Activated CD4-positive, alpha-beta T cell treated with anti-CD3 and anti-CD28 coated beads for 36 hours (primary cell): ENCODE measurements at regions of chr6 and their contacts with region 1.

Region 1: GRCh38 chr6:30616811-30617564 is at the start of gene PPP1R10:
- DNase-seq: peak; percentile 99
- ATAC-seq: peak; percentile 77
- H3K4me3 Mint-ChIP-seq: peak within 1 kb of the TSS; percentile 97
- H3K27ac Mint-ChIP-seq: peak within 1 kb of the TSS; percentile 98
- H3K4me1 Mint-ChIP-seq: peaks cover 40% of the 10 kb centered on the region
- H3K27me3 Mint-ChIP-seq: no peaks in the 10 kb centered on the region
- total RNA-seq, gene PPP1R10: 75.6 to 100.0 TPM

Region 2: GRCh38 chr6:30326526-30327260 is 290.3 kb before region 1 on chr6 and contains the start of gene TRIM39:
- CTCF ChIA-PET with region 1: no interaction called
- POLR2A ChIA-PET with region 1: no interaction called
- intact Hi-C with region 1: loop called (anchors 1 to 5 kb)
- DNase-seq: peak; percentile 93
- ATAC-seq: peak; percentile 60
- H3K4me3 Mint-ChIP-seq: peak within 1 kb of the TSS; percentile 86
- H3K27ac Mint-ChIP-seq: peak within 1 kb of the TSS; percentile 97
- H3K4me1 Mint-ChIP-seq: peaks cover 54% of the 10 kb centered on the region
- H3K27me3 Mint-ChIP-seq: no peaks in the 10 kb centered on the region
- total RNA-seq, gene TRIM39: 16.5 to 17.5 TPM

Region 3: GRCh38 chr6:30556066-30556905 is 60.7 kb before region 1 on chr6 and contains the start of gene GNL1:
- CTCF ChIA-PET with region 1: interaction called, 7 read pairs
- POLR2A ChIA-PET with region 1: interaction called, 8 read pairs
- intact Hi-C with region 1: loop called (anchors 1 kb)
- DNase-seq: peak; percentile 100
- ATAC-seq: peak; percentile 89
- H3K4me3 Mint-ChIP-seq: peak within 1 kb of the TSS; percentile 97
- H3K27ac Mint-ChIP-seq: peak within 1 kb of the TSS; percentile 100
- H3K4me1 Mint-ChIP-seq: peaks cover 34% of the 10 kb centered on the region
- H3K27me3 Mint-ChIP-seq: no peaks in the 10 kb centered on the region
- total RNA-seq, gene GNL1: 91.3 to 104 TPM

Region 4: GRCh38 chr6:30672445-30673253 is 55.7 kb after region 1 on chr6 and contains the start of gene DHX16:
- CTCF ChIA-PET with region 1: interaction called, 5 read pairs
- POLR2A ChIA-PET with region 1: interaction called, 5 read pairs
- intact Hi-C with region 1: loop called (anchors 2 kb)
- DNase-seq: peak; percentile 93
- ATAC-seq: peak; percentile 83
- H3K4me3 Mint-ChIP-seq: peak within 1 kb of the TSS; percentile 82
- H3K27ac Mint-ChIP-seq: peak within 1 kb of the TSS; percentile 83
- H3K4me1 Mint-ChIP-seq: peaks cover 27% of the 10 kb centered on the region
- H3K27me3 Mint-ChIP-seq: no peaks in the 10 kb centered on the region
- total RNA-seq, gene DHX16: 34.5 to 36.7 TPM

Region 5: DNA sequence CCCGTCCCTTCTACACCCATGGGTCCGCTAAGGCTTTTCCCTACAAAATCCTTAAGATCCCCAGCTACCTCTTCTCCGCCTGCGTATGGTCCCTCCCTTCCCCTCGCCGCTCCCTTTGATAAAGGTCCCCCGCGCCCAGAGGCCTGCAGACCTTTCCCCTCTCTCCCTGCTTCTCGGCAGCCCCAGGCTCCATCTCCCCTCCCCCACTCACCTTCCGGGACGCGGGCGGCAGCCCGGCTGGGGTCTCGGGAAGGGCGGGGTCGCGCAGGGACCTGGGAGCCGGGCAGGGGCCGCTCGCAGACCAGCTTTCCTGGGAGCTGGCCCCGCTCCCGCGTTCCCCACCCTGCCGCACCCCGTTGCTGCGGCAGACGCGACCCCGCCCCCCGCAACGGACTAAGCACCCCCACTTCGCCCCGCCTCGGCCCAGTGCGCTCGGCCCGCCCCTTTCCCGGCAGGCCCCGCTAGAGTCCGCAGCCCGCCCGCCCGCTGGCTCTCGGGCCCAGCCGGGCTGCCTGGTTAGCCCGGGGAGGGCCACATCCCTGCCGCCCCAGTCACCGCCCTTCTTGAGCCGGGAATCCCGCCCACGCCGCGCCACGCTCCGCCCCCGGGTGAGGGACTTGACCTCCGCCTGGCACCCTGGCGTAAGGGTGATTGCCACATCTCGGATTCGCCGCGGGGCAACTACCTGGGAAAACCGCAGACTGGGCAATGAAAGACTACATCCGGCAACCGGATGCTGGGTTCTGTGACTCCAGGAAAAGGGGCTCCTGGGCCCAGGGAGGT is 125.5 kb after region 1 on chr6 and contains the start of gene FLOT1:
- CTCF ChIA-PET with region 1: no interaction called
- POLR2A ChIA-PET with region 1: interaction called, 8 read pairs
- intact Hi-C with region 1: loop called in 1 of 2 experiments (anchors 1 kb)
- DNase-seq: peak; percentile 98
- ATAC-seq: peak; percentile 74
- H3K4me3 Mint-ChIP-seq: peak within 1 kb of the TSS; percentile 96
- H3K27ac Mint-ChIP-seq: peak within 1 kb of the TSS; percentile 95
- H3K4me1 Mint-ChIP-seq: peaks cover 67% of the 10 kb centered on the region
- H3K27me3 Mint-ChIP-seq: no peaks in the 10 kb centered on the region
- total RNA-seq, gene FLOT1: 155 to 188 TPM

Region 6: GRCh38 chr6:31356946-31357466 is 740.0 kb after region 1 on chr6 and contains the start of gene HLA-B:
- CTCF ChIA-PET with region 1: no interaction called
- POLR2A ChIA-PET with region 1: no interaction called
- intact Hi-C with region 1: loop called in 1 of 2 experiments (anchors 2 kb)
- DNase-seq: peak; percentile 91
- ATAC-seq: peak; percentile 80
- H3K4me3 Mint-ChIP-seq: peak within 1 kb of the TSS; percentile 98
- H3K27ac Mint-ChIP-seq: peak within 1 kb of the TSS; percentile 99
- H3K4me1 Mint-ChIP-seq: peaks cover 56% of the 10 kb centered on the region
- H3K27me3 Mint-ChIP-seq: peaks cover 5% of the 10 kb centered on the region
- total RNA-seq, gene HLA-B: 2,101 to 2,412 TPM

Region 7: GRCh38 chr6:31407699-31408098 is 790.7 kb after region 1 on chr6:
- CTCF ChIA-PET with region 1: no interaction called
- POLR2A ChIA-PET with region 1: no interaction called
- intact Hi-C with region 1: no loop called
- DNase-seq: no peak
- ATAC-seq: no peak
- H3K4me3 Mint-ChIP-seq: no peak overlapping the region
- H3K27ac Mint-ChIP-seq: no peak overlapping the region
- H3K4me1 Mint-ChIP-seq: peaks cover 49% of the 10 kb centered on the region
- H3K27me3 Mint-ChIP-seq: no peaks in the 10 kb centered on the region